ENCODE measurements at regions of chr1 and their contacts with region 1.

Region 1: DNA sequence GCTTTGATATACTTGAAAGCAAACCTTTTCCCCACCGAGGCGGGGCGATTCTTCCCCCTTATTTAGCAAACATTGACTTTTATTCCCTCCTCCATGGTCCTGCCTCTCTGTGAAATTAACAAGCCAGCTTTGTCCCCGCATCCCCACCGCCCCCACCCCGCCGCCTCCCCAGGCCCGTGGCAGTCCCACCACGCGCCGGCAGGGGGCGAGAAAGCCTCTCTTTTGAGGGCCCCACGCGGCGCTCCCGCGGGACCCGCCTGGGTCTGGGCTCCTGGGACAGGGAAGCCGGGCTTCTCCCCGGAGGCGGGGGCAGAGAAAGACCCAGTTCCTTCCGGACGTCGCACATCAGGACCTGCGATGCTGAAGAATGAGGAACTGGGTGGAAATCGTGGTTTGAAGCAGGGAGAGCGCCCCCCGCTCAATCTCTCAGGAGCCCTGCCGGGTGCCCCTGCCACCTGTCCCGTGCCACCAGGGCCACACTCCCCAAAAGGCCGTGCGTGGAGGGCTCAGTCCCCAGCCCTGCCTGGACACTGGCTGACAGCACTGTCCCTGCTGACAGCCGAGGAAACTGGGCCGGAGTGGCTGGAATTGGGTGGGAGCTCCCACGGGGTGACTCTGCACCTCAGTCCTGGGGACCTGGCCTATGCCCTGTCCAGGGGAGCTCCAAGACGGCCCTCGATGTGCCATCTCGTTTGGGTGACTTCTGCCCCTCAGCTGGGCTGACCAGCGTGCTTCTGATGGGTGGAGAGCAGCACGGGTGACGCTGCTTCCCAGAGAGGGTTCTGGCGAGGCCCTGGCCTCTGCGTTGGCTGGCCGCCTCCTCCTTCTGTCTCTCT is 8.6 kb upstream of the ACTRT2 start:
- DNase-seq: peak; percentile 57
- H3K4me3 Mint-ChIP-seq: no peak overlapping the region
- H3K27ac Mint-ChIP-seq: no peak overlapping the region
- H3K4me1 Mint-ChIP-seq: peaks cover 2% of the 10 kb centered on the region
- H3K27me3 Mint-ChIP-seq: peaks cover 9% of the 10 kb centered on the region

Region 2: GRCh38 chr1:3170561-3171453 is 158.1 kb after region 1 on chr1:
- CTCF ChIA-PET with region 1: no interaction called
- intact Hi-C with region 1: no loop called
- DNase-seq: no peak
- H3K4me3 Mint-ChIP-seq: no peak overlapping the region
- H3K27ac Mint-ChIP-seq: no peak overlapping the region
- H3K4me1 Mint-ChIP-seq: no peaks in the 10 kb centered on the region
- H3K27me3 Mint-ChIP-seq: peaks cover 37% of the 10 kb centered on the region

Region 3: DNA sequence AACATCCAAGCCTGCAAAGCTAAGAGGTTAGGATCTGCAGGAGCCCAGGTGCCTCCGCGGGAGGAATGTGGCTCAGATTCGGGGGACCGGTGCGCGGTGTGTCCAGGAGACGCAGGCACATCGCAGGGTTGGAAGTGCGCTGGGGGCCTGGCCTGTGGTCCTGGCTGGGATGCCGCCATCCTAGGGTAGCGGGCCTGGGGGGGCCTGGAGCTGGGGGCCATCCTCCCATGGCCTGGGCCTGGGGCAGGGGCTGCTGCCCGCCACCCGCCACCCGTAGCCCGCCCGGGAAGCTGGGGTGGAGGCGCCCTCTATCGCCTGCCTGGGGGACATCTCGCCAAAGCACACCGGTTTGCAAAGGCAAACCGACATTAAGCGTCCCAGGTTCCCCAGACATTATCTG is 271.2 kb after region 1 on chr1:
- CTCF ChIA-PET with region 1: no interaction called
- intact Hi-C with region 1: loop called (anchors 1 kb)
- DNase-seq: peak; percentile 45
- H3K4me3 Mint-ChIP-seq: no peak overlapping the region
- H3K27ac Mint-ChIP-seq: no peak overlapping the region
- H3K4me1 Mint-ChIP-seq: no peaks in the 10 kb centered on the region
- H3K27me3 Mint-ChIP-seq: peaks cover 3% of the 10 kb centered on the region

Region 4: DNA sequence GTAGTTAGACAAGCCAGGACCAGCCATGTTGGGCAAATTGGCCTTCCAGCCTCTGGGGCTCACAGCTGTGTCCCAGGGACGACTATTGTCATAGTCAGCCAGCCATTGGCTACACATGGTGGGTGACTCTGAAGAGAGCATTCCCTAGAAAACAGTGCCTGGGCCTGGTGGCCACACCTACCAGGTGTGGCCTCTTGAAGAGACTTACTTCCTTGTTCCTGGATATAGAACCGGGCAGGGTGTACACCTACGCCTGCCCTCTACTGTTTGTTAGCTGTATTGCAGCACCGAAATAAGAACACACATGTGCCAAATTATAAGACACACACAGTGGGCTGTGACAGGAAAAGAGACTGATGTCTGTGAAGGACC is 307.2 kb after region 1 on chr1:
- CTCF ChIA-PET with region 1: interaction called, 4 read pairs
- intact Hi-C with region 1: loop called (anchors 1 kb)
- DNase-seq: peak; percentile 71
- H3K4me3 Mint-ChIP-seq: no peak overlapping the region
- H3K27ac Mint-ChIP-seq: no peak overlapping the region
- H3K4me1 Mint-ChIP-seq: peaks cover 12% of the 10 kb centered on the region
- H3K27me3 Mint-ChIP-seq: peaks cover 2% of the 10 kb centered on the region

Region 5: GRCh38 chr1:3423245-3423829 is 410.7 kb after region 1 on chr1:
- CTCF ChIA-PET with region 1: interaction called, 4 read pairs
- intact Hi-C with region 1: loop called (anchors 1 kb)
- DNase-seq: no peak
- H3K4me3 Mint-ChIP-seq: no peak overlapping the region
- H3K27ac Mint-ChIP-seq: no peak overlapping the region
- H3K4me1 Mint-ChIP-seq: no peaks in the 10 kb centered on the region
- H3K27me3 Mint-ChIP-seq: no peaks in the 10 kb centered on the region